GM12878 (cell line): ENCODE measurements at regions of chr4 and their contacts with region 1.

Region 1: GRCh38 chr4:104451573-104451972 is 43.1 kb downstream of the CXXC4 start:
- DNase-seq: no peak
- ATAC-seq: peak; percentile 94
- H3K4me3 ChIP-seq: no peak overlapping the region
- H3K27ac ChIP-seq: no peak overlapping the region
- H3K4me1 ChIP-seq: no peaks in the 10 kb centered on the region
- H3K27me3 ChIP-seq: no peaks in the 10 kb centered on the region
- CTCF ChIP-seq: peak; percentile 14 to 35 (median 31); a peak in 3 of 6 replicates
- EP300 ChIP-seq: no peak
- POLR2A ChIP-seq: no peak
- RAD21 ChIP-seq: peak; percentile 45

Region 2: GRCh38 chr4:104064646-104065577 is 386.7 kb before region 1 on chr4:
- CTCF ChIA-PET with region 1: interaction called, 3 read pairs
- POLR2A ChIA-PET with region 1: no interaction called
- RAD21 ChIA-PET with region 1: no interaction called
- SMC1A ChIA-PET with region 1: no interaction called
- in situ Hi-C with region 1: no loop called
- intact Hi-C with region 1: loop called (anchors 1 kb)
- DNase-seq: peak; percentile 23
- ATAC-seq: peak; percentile 97
- H3K4me3 ChIP-seq: no peak overlapping the region
- H3K27ac ChIP-seq: no peak overlapping the region
- H3K4me1 ChIP-seq: no peaks in the 10 kb centered on the region
- H3K27me3 ChIP-seq: no peaks in the 10 kb centered on the region
- CTCF ChIP-seq: peak; percentile 56 to 74 (median 58); a peak in 5 of 6 replicates
- EP300 ChIP-seq: no peak
- POLR2A ChIP-seq: no peak
- RAD21 ChIP-seq: peak; percentile 88

Region 3: DNA sequence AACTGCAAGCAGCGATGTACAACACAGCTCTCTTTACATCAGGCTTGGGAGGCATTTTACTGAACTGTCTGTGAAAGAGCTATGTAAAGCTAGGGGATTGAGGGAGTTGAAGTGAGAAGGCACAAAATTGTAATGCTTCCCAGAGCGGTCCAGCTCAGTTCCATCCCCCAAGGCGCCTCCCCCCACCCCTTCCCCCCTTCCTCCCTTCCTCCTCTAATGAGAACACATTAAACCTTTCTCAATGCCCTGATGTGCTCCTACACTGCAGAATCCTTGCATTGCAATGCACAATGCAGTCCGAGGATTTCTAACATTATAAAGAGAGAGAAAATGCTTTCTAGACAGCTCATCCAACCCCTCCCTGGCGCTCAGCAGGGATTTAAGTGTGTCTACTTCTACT is 30.8 kb before region 1 on chr4:
- CTCF ChIA-PET with region 1: interaction called, 4 read pairs
- POLR2A ChIA-PET with region 1: interaction called, 3 read pairs
- RAD21 ChIA-PET with region 1: no interaction called
- SMC1A ChIA-PET with region 1: interaction called, 11 read pairs
- in situ Hi-C with region 1: no loop called
- intact Hi-C with region 1: no loop called
- DNase-seq: no peak
- ATAC-seq: no peak
- H3K4me3 ChIP-seq: no peak overlapping the region
- H3K27ac ChIP-seq: no peak overlapping the region
- H3K4me1 ChIP-seq: no peaks in the 10 kb centered on the region
- H3K27me3 ChIP-seq: no peaks in the 10 kb centered on the region
- CTCF ChIP-seq: no peak
- EP300 ChIP-seq: no peak
- POLR2A ChIP-seq: no peak
- RAD21 ChIP-seq: no peak